CD8-positive, alpha-beta T cell (primary cell): ENCODE measurements at regions of chr1 and their contacts with region 1.

Region 1: DNA sequence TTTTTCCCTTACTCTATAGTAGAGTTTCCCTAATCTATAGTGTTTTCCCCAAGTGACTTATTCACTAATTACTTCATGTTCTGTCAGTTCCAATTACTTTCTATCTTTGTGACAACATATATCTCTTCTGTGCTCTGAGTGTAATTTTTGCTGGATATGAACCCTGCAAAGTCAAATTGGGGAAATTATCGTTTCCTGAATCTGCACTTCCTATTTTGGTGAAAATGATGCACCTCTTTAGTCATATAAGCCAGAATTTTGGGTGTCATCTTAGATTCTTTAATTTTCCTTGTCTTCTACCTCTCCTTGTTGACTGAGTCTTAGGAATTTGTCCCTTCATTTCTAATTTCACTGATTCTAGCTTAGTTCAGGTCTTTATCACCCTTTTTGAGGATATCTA is 33.4 kb upstream of the PRKACB start:
- DNase-seq: no peak
- ATAC-seq: no peak
- H3K4me3 ChIP-seq: no peak overlapping the region
- H3K4me3 Mint-ChIP-seq: no peak overlapping the region
- H3K27ac ChIP-seq: no peak overlapping the region
- H3K27ac Mint-ChIP-seq: no peak overlapping the region
- H3K4me1 ChIP-seq: no peaks in the 10 kb centered on the region
- H3K4me1 Mint-ChIP-seq: no peaks in the 10 kb centered on the region
- H3K27me3 ChIP-seq: no peaks in the 10 kb centered on the region
- H3K27me3 Mint-ChIP-seq: no peaks in the 10 kb centered on the region
- CTCF ChIP-seq: no peak

Region 2: DNA sequence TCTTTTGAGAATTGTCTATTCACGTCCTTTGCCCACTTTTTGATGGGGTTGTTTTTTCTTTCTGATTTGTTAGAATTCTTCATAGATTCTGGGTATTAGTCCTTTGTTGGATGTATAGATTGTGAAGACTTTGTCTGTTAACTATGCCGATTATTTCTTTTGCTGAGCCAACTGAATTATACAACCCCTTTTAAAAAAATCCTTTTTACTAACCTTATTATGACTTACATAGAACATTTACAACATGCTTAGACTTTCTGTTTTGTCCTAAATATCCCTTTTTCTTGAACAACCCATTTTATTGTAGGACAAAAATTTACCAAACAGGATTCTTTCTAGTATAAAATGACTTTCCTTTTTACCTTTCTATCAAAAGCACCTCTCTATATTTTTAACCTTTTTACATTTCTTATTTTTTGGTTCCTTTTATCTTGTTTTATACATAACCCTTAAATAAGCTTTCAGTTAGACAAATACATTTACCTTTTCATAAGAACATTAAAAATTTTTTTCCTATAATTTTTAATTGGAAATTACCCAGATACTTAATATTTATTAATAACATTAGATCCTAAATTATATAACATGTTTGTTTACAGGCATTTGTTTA is 41.3 kb before region 1 on chr1:
- CTCF ChIA-PET with region 1: no interaction called
- POLR2A ChIA-PET with region 1: no interaction called
- intact Hi-C with region 1: no loop called
- DNase-seq: no peak
- ATAC-seq: no peak
- H3K4me3 ChIP-seq: no peak overlapping the region
- H3K4me3 Mint-ChIP-seq: no peak overlapping the region
- H3K27ac ChIP-seq: no peak overlapping the region
- H3K27ac Mint-ChIP-seq: no peak overlapping the region
- H3K4me1 ChIP-seq: no peaks in the 10 kb centered on the region
- H3K4me1 Mint-ChIP-seq: no peaks in the 10 kb centered on the region
- H3K27me3 ChIP-seq: no peaks in the 10 kb centered on the region
- H3K27me3 Mint-ChIP-seq: peaks cover 19% of the 10 kb centered on the region
- CTCF ChIP-seq: no peak

Region 3: DNA sequence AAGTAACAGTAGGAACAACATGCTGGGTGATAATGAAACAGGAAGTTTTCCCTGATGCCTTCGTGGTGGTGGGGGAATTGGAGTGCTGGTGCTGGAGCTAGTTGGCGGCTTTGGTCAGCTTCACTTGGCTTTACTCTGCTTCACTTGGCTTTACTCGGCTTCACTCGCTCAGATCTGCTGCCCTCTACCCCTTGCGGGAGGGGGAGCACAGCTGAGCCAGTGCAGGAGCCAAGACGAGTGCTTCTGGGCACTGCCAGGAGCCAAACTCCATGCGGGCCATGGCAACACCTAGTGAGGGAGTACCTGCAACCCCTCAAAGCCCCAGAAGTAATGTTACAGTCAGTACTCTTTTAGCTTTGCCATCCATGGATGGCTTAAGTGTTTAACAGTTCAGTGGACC is 22.9 kb after region 1 on chr1:
- CTCF ChIA-PET with region 1: no interaction called
- POLR2A ChIA-PET with region 1: no interaction called
- intact Hi-C with region 1: loop called in 1 of 2 experiments (anchors 1 kb)
- DNase-seq: no peak
- ATAC-seq: no peak
- H3K4me3 ChIP-seq: no peak overlapping the region
- H3K4me3 Mint-ChIP-seq: no peak overlapping the region
- H3K27ac ChIP-seq: no peak overlapping the region
- H3K27ac Mint-ChIP-seq: no peak overlapping the region
- H3K4me1 ChIP-seq: peaks cover 10% of the 10 kb centered on the region
- H3K4me1 Mint-ChIP-seq: peaks cover 14% of the 10 kb centered on the region
- H3K27me3 ChIP-seq: no peaks in the 10 kb centered on the region
- H3K27me3 Mint-ChIP-seq: no peaks in the 10 kb centered on the region
- CTCF ChIP-seq: no peak